GM12878 (cell line): ENCODE measurements at regions of chr20 and their contacts with region 1.

Region 1: GRCh38 chr20:38842558-38842981 is 37.1 kb downstream of the PPP1R16B start:
- DNase-seq: peak; percentile 91
- ATAC-seq: peak; percentile 99
- H3K4me3 ChIP-seq: peak overlapping the region; percentile 8; the same call in 1 of the 2 replicates
- H3K27ac ChIP-seq: peak overlapping the region; percentile 96
- H3K4me1 ChIP-seq: peaks cover 59% of the 10 kb centered on the region
- H3K27me3 ChIP-seq: no peaks in the 10 kb centered on the region
- CTCF ChIP-seq: no peak
- EP300 ChIP-seq: peak; percentile 67 to 95
- POLR2A ChIP-seq: no peak
- RAD21 ChIP-seq: peak; percentile 29; the same call in 1 of the 2 replicates

Region 2: GRCh38 chr20:38805502-38805957 is 37.0 kb before region 1 on chr20 and contains the start of gene PPP1R16B:
- CTCF ChIA-PET with region 1: interaction called, 29 read pairs
- POLR2A ChIA-PET with region 1: interaction called, 59 read pairs
- RAD21 ChIA-PET with region 1: interaction called, 78 read pairs
- SMC1A ChIA-PET with region 1: interaction called, 187 read pairs
- in situ Hi-C with region 1: no loop called
- intact Hi-C with region 1: loop called (anchors 2 kb)
- DNase-seq: no peak
- ATAC-seq: peak; percentile 78
- H3K4me3 ChIP-seq: peak within 1 kb of the TSS; percentile 87
- H3K27ac ChIP-seq: peak within 1 kb of the TSS; percentile 84
- H3K4me1 ChIP-seq: peaks cover 31% of the 10 kb centered on the region
- H3K27me3 ChIP-seq: no peaks in the 10 kb centered on the region
- CTCF ChIP-seq: no peak
- EP300 ChIP-seq: no peak
- POLR2A ChIP-seq: peak; percentile 96
- RAD21 ChIP-seq: no peak
- polyA plus RNA-seq, gene PPP1R16B: 13.4 to 14.2 TPM

Region 3: GRCh38 chr20:38973645-38974044 is 131.1 kb after region 1 on chr20:
- CTCF ChIA-PET with region 1: no interaction called
- POLR2A ChIA-PET with region 1: no interaction called
- RAD21 ChIA-PET with region 1: no interaction called
- SMC1A ChIA-PET with region 1: no interaction called
- in situ Hi-C with region 1: no loop called
- intact Hi-C with region 1: no loop called
- DNase-seq: no peak
- ATAC-seq: no peak
- H3K4me3 ChIP-seq: no peak overlapping the region
- H3K27ac ChIP-seq: peak overlapping the region; percentile 26
- H3K4me1 ChIP-seq: no peaks in the 10 kb centered on the region
- H3K27me3 ChIP-seq: no peaks in the 10 kb centered on the region
- CTCF ChIP-seq: no peak
- EP300 ChIP-seq: no peak
- POLR2A ChIP-seq: no peak
- RAD21 ChIP-seq: no peak